ENCODE measurements at regions of chr19 and their contacts with region 1.

Region 1: DNA sequence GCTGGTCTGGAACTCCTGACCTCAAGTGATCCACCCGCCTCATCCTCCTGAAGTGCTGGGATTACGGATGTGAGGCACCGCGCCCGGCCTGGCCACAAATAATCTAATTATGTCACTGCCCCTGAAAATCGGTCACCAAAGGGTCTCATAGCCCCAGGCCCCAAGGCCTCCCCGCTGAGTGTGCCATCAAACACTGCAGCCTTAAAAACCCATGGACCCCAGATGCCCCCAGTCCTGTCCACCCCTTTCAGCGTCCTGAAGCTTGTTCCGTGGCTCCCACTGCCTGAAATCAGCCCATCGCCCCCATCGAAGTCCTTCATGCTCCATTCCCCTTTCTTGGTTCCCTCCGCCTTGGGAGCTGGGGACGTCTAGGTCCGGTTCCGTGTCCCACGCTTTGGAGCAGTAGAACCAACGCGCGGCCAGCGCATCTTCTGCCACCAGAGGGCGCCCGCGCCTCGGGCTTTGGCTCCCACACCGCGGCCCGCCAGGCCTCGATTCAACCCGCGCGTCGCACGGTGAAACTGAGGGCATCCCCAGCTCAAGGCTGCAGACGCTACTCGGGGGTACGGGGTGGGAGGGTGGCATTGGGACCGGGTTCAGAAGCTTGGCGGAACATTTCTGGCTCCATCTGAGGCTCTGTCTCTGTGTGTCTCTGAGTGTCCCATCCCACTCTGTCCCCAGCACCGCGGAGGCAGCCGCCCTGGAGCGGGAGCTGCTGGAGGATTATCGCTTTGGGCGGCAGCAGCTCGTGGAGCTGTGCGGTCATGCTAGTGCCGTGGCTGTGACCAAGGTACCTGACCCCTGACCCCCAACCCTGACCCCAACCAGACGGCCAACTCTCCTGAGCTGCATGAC is 3.5 kb downstream of the YJEFN3 start:
- DNase-seq: peak; percentile 85
- H3K4me3 ChIP-seq: no peak overlapping the region
- H3K27ac ChIP-seq: no peak overlapping the region
- H3K4me1 ChIP-seq: no peaks in the 10 kb centered on the region
- H3K27me3 ChIP-seq: peaks cover under 1% of the 10 kb centered on the region
- CTCF ChIP-seq: peak; percentile 95

Region 2: DNA sequence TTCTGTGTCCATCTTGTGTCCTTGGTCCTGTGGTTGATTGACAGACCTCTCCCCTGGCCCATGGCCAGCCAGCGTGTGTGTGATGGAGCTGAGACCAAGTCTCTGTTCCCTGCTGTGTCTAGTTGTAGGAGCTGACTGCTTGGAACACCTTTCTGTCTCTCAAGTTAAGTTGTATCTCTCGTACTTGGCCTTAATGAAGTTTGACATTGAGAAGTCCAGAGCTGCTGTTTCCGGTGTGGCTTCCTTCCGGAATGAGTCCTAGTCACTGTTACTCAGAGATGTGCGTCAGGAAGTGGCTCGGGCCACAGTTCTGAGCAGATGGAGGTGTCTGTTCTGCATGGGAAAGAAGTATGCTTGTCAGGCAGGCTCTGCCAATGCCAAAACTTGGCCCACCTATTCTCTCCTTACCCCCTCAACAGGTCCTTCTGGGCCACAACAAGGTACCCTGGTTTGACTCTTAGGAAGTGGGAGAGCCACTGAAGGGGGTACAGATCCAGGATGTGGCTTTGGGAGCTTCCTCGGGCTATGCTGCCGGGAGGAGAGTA is 72.4 kb before region 1 on chr19:
- intact Hi-C with region 1: no loop called
- DNase-seq: no peak
- H3K4me3 ChIP-seq: no peak overlapping the region
- H3K27ac ChIP-seq: peak overlapping the region; percentile 74
- H3K4me1 ChIP-seq: peaks cover 50% of the 10 kb centered on the region
- H3K27me3 ChIP-seq: no peaks in the 10 kb centered on the region
- CTCF ChIP-seq: no peak

Region 3: DNA sequence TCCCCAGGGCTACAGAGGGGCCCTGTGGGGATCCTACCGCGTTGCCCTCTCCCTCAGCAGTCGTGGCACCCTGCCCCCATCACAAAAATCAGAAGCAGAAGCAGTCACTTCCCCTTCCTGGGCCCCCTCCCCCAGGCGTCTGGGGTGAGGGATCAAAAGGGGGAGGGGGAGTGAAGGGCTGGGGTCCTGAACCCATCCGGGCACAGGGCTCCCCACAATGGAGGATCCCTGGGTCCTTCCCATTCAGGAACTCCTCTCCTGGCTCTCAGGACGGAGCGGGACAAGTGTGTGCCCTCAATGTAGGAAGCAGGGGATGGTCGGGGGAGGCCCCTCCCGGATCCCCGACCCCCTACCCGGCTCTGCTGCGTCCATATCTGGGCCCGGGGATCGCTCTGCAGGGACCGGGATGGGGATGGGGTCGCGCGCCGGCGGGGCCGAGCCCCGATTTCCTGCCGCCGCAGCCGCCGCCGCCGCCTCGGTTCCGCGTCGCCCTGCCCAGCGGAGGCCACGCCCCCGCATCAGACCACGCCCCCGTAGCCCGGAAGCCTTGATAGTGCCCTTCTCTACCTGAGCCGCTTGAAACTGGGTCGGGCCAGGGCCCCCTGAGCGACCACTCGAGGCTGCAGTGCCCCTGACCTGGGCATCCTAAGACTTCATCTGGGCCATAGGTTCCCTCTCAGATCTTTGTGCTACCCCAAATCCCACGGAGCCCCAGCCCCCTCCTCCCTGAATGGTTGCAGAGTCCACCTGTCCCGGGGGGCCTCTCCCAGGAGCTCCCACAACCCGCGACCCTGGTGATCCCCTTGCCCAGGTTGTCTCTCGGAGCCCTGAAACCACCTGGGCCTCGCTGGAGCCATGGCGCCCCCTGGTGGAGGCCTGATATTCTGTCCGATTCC is 111.2 kb after region 1 on chr19 and contains the start of gene GMIP:
- intact Hi-C with region 1: loop called (anchors 2 kb)
- DNase-seq: peak; percentile 92
- H3K4me3 ChIP-seq: peak within 1 kb of the TSS; percentile 75
- H3K27ac ChIP-seq: peak within 1 kb of the TSS; percentile 67
- H3K4me1 ChIP-seq: no peaks in the 10 kb centered on the region
- H3K27me3 ChIP-seq: no peaks in the 10 kb centered on the region
- CTCF ChIP-seq: peak; percentile 80
- total RNA-seq, gene GMIP: 31.4 to 32.2 TPM

Region 4: GRCh38 chr19:19956434-19957075 is 424.4 kb after region 1 on chr19:
- intact Hi-C with region 1: loop called (anchors 5 kb)
- DNase-seq: no peak
- H3K4me3 ChIP-seq: no peak overlapping the region
- H3K27ac ChIP-seq: no peak overlapping the region
- H3K4me1 ChIP-seq: no peaks in the 10 kb centered on the region
- H3K27me3 ChIP-seq: no peaks in the 10 kb centered on the region
- CTCF ChIP-seq: no peak